Activated CD4-positive, alpha-beta T cell treated with anti-CD3 and anti-CD28 coated beads for 36 hours (primary cell): ENCODE measurements at regions of chr5 and their contacts with region 1.

Region 1: GRCh38 chr5:67577424-67577823 is 380.8 kb upstream of the CD180 start:
- DNase-seq: no peak
- ATAC-seq: no peak
- H3K4me3 Mint-ChIP-seq: no peak overlapping the region
- H3K27ac Mint-ChIP-seq: no peak overlapping the region
- H3K4me1 Mint-ChIP-seq: no peaks in the 10 kb centered on the region
- H3K27me3 Mint-ChIP-seq: no peaks in the 10 kb centered on the region

Region 2: DNA sequence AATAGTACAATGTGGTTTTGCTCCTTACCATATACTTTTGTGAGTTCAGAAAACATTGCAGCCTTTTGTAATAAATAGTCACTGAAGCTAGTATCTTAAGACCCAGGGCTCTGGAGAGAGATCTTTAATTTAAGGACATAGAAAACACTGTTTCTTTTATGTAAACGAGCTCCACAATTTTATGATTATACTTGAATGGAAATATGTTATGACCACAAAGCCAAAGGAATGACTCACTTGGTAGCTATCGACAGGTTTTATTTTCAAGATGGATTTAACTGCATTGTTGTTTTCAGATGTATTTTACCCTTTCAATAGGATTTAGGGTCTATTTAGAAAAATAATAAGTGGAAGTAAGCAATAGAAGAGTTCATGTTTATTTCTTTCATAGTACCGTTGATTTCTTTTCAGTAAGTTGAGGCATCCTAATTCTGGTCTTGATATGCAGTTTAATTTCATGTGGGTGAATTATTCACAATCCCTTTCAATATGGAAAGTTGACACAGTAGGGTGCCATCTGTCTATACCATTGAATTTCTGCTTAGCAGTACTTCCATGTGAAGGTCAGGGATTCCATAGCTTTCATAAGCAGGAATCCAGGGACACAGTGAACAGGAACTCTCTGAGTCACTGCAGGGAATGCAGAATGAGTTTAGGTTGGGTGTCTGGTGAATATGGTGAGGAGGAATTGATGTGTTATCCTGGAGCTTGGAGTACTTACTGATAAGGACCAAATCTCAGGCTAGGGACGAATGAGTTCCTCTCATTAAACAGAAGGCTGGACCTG is 538.4 kb before region 1 on chr5:
- CTCF ChIA-PET with region 1: no interaction called
- POLR2A ChIA-PET with region 1: no interaction called
- intact Hi-C with region 1: no loop called
- DNase-seq: no peak
- ATAC-seq: peak; percentile 33
- H3K4me3 Mint-ChIP-seq: no peak overlapping the region
- H3K27ac Mint-ChIP-seq: no peak overlapping the region
- H3K4me1 Mint-ChIP-seq: peaks cover 40% of the 10 kb centered on the region
- H3K27me3 Mint-ChIP-seq: no peaks in the 10 kb centered on the region

Region 3: GRCh38 chr5:67425514-67425913 is 151.9 kb before region 1 on chr5:
- CTCF ChIA-PET with region 1: no interaction called
- POLR2A ChIA-PET with region 1: no interaction called
- intact Hi-C with region 1: no loop called
- DNase-seq: no peak
- ATAC-seq: no peak
- H3K4me3 Mint-ChIP-seq: no peak overlapping the region
- H3K27ac Mint-ChIP-seq: no peak overlapping the region
- H3K4me1 Mint-ChIP-seq: no peaks in the 10 kb centered on the region
- H3K27me3 Mint-ChIP-seq: no peaks in the 10 kb centered on the region

Region 4: GRCh38 chr5:67549947-67550346 is 27.5 kb before region 1 on chr5:
- CTCF ChIA-PET with region 1: no interaction called
- POLR2A ChIA-PET with region 1: no interaction called
- intact Hi-C with region 1: no loop called
- DNase-seq: no peak
- ATAC-seq: no peak
- H3K4me3 Mint-ChIP-seq: no peak overlapping the region
- H3K27ac Mint-ChIP-seq: no peak overlapping the region
- H3K4me1 Mint-ChIP-seq: peaks cover 2% of the 10 kb centered on the region
- H3K27me3 Mint-ChIP-seq: no peaks in the 10 kb centered on the region

Region 5: DNA sequence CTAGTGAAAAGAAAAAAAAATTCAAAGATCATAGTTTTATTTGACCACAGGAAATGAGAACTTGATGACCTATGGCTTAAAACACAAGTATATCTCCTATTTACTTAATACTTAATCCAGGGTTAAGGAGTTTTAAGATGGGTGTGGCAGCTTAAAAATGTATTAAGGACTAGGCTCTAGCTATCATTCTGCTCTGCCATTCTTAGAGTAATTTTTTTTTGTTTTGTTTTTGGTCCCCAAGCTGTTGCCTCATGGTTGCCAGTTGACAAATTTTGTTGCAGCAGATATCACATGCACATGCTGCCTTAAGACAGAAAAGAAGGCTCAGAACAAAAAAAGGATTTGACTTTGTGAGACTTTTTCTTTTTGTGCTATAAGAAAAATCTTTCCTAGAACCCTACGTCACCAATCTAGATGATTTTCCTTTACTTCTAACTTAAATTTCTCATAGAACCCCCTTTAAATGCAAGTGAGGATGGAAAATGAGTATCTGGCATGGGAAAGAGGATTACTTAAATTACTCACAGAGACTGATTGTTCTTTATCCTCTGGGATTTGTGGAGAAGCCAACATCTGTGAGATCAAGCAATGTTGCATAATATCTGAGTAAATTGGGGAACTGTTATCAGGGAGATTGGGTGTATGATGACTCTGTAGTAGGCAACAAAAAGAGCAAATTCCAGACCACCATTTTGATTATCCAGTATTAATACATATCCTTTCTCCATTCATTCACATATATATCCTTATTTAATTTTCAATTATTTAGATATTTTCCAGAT is 16.1 kb before region 1 on chr5:
- CTCF ChIA-PET with region 1: no interaction called
- POLR2A ChIA-PET with region 1: no interaction called
- intact Hi-C with region 1: loop called in 1 of 2 experiments (anchors 1 kb)
- DNase-seq: no peak
- ATAC-seq: no peak
- H3K4me3 Mint-ChIP-seq: no peak overlapping the region
- H3K27ac Mint-ChIP-seq: no peak overlapping the region
- H3K4me1 Mint-ChIP-seq: peaks cover 3% of the 10 kb centered on the region
- H3K27me3 Mint-ChIP-seq: no peaks in the 10 kb centered on the region

Region 6: GRCh38 chr5:67699560-67699959 is 122.1 kb after region 1 on chr5:
- CTCF ChIA-PET with region 1: no interaction called
- POLR2A ChIA-PET with region 1: no interaction called
- intact Hi-C with region 1: no loop called
- DNase-seq: no peak
- ATAC-seq: no peak
- H3K4me3 Mint-ChIP-seq: no peak overlapping the region
- H3K27ac Mint-ChIP-seq: no peak overlapping the region
- H3K4me1 Mint-ChIP-seq: no peaks in the 10 kb centered on the region
- H3K27me3 Mint-ChIP-seq: peaks cover 2% of the 10 kb centered on the region